Activated CD8-positive, alpha-beta T cell treated with anti-CD3 and anti-CD28 coated beads, Interleukin-2, amount 10 ng/mL, durations not matched to agents 7 days and 5 days (primary cell): ENCODE measurements at regions of chr5 and their contacts with region 1.

Region 1: DNA sequence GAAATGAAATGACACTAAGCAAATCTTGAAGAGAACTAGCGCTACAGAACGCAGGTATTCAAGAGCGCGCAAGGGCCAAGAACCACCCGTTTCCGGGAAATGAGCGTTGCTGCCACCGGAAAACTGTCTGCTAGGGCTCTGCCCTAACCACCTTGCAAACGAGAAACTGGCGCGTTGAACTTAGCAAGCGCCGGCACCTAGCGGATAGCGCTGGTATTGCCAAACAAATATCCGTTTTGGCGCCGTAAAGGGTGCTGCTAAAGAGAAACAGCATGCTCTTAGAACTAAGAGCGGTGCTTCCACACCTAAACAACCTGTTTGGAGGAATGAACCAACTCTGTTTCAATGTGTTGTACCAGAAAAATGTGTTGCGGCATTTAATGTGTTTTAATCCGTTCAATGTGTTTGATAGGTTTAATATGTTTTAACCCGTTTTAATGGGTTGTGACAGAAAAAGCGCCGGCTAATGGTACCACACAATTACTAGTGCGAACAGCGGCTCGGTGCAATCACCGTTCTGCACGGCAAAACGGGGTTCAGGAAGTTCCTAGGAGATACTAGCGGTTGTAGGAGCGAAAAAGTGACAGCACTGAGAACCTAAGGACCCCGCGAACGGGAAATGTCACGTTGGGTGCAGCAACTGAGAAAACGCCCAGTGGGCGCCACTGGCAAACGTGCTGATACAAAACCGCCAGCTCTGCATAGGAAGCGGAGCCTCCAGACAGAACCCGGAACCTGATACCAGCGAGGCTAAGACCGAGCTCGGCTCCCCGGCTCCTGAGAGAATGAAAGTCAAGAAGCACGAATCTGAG is at the start of gene ANXA2R:
- DNase-seq: peak; percentile 97
- ATAC-seq: peak; percentile 49
- H3K4me3 Mint-ChIP-seq: peak within 1 kb of the TSS; percentile 93
- H3K27ac Mint-ChIP-seq: peak within 1 kb of the TSS; percentile 100
- H3K4me1 Mint-ChIP-seq: peaks cover 39% of the 10 kb centered on the region
- H3K27me3 Mint-ChIP-seq: no peaks in the 10 kb centered on the region
- total RNA-seq, gene ANXA2R: 28.0 to 29.3 TPM

Region 2: GRCh38 chr5:42994246-42995151 is 46.0 kb before region 1 on chr5:
- CTCF ChIA-PET with region 1: interaction called, 57 read pairs
- POLR2A ChIA-PET with region 1: interaction called, 469 read pairs
- DNase-seq: peak; percentile 94
- ATAC-seq: peak; percentile 60
- H3K4me3 Mint-ChIP-seq: peak overlapping the region; percentile 94
- H3K27ac Mint-ChIP-seq: peak overlapping the region; percentile 99
- H3K4me1 Mint-ChIP-seq: peaks cover 19% of the 10 kb centered on the region
- H3K27me3 Mint-ChIP-seq: no peaks in the 10 kb centered on the region

Region 3: DNA sequence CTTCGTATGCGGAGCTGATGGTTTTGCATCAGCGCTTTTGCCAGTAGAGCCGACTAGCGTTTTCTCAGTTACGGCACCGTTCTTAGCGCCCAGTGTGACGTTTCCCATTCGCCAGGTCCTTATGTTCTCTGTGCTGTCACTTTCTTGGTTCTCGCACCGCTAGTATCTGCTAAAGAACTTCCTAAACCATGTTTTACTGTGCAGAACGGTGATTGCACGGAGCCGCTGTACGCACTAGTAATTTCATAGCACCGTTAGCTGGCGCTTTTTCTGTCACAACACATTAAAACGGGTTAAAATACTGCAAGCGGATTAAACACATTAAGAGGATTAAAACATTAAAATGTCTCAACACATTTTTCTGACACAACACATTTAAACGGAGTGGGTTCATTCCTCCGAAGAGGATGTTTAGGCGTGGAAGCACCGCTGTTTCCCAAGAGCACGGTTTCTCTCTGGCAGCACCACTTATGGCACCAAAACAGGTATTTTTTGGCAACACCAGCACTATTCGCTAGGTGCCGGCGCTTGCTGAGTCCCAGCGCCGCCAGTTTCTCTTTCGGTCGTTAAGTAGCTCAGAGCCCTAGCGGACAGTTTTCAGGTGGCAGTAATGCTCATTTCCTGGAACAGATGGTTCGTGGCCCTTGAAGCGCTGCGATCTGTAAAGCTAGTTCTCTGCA is 20.7 kb before region 1 on chr5:
- CTCF ChIA-PET with region 1: interaction called, 108 read pairs
- POLR2A ChIA-PET with region 1: interaction called, 532 read pairs
- DNase-seq: peak; percentile 94
- ATAC-seq: peak; percentile 73
- H3K4me3 Mint-ChIP-seq: peak overlapping the region; percentile 95
- H3K27ac Mint-ChIP-seq: peak overlapping the region; percentile 99
- H3K4me1 Mint-ChIP-seq: peaks cover 36% of the 10 kb centered on the region
- H3K27me3 Mint-ChIP-seq: no peaks in the 10 kb centered on the region

Region 4: GRCh38 chr5:43066799-43067741 is 26.6 kb after region 1 on chr5:
- CTCF ChIA-PET with region 1: interaction called, 54 read pairs
- POLR2A ChIA-PET with region 1: interaction called, 243 read pairs
- DNase-seq: peak; percentile 91
- ATAC-seq: peak; percentile 59
- H3K4me3 Mint-ChIP-seq: peak overlapping the region; percentile 94
- H3K27ac Mint-ChIP-seq: peak overlapping the region; percentile 99
- H3K4me1 Mint-ChIP-seq: peaks cover 43% of the 10 kb centered on the region
- H3K27me3 Mint-ChIP-seq: no peaks in the 10 kb centered on the region